ENCODE measurements at regions of chr15 and their contacts with region 1.

Region 1: DNA sequence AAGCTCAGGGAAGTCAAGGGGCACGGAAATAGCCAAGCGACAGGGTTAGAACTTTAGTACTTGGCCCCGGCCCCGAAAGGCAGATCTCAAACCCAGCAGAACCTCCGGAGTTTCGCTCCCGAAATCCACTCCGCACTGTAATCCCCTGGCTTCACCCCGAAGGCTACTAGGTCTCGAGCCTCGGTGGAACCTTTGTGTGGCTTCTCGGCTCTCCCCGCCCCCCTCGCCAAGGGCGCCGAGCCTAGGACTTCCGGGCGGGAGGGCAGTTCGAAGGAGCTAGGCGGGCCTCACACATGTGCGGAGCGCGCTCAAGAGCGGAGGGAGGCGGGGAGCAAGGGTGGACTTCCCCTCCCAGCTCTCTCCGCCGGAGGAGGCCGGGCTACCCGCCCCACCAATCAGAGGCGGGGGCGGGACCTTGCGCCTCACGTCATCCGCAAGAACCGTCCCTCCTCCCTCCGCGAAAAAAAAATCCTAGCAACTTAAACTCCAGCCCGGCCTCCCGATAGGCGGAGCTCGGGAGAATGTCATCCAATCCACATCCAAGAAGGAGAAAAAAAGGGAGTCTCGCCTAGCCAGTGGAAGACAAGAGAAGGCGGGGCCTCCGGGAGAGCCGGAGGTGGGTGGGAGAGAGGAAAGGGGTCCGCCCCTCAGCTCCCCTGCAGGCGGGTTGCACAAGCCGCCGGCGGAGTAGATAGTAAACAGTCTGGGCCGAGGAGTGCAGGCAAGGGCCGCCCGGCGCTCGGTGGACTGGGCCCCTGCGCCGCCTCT is 2.4 kb upstream of the SIN3A start:
- DNase-seq: peak; percentile 99
- ATAC-seq: peak; percentile 21
- H3K4me3 ChIP-seq: peak overlapping the region; percentile 86
- H3K27ac ChIP-seq: peak overlapping the region; percentile 74
- H3K4me1 ChIP-seq: peaks cover 30% of the 10 kb centered on the region
- H3K27me3 ChIP-seq: no peaks in the 10 kb centered on the region
- CTCF ChIP-seq: no peak

Region 2: GRCh38 chr15:75350601-75351361 is 103.1 kb before region 1 on chr15:
- CTCF ChIA-PET with region 1: no interaction called
- POLR2A ChIA-PET with region 1: interaction called, 24 read pairs
- intact Hi-C with region 1: no loop called
- DNase-seq: no peak
- ATAC-seq: no peak
- H3K4me3 ChIP-seq: no peak overlapping the region
- H3K27ac ChIP-seq: no peak overlapping the region
- H3K4me1 ChIP-seq: no peaks in the 10 kb centered on the region; the same call in 1 of the 2 replicates
- H3K27me3 ChIP-seq: no peaks in the 10 kb centered on the region
- CTCF ChIP-seq: no peak

Region 3: DNA sequence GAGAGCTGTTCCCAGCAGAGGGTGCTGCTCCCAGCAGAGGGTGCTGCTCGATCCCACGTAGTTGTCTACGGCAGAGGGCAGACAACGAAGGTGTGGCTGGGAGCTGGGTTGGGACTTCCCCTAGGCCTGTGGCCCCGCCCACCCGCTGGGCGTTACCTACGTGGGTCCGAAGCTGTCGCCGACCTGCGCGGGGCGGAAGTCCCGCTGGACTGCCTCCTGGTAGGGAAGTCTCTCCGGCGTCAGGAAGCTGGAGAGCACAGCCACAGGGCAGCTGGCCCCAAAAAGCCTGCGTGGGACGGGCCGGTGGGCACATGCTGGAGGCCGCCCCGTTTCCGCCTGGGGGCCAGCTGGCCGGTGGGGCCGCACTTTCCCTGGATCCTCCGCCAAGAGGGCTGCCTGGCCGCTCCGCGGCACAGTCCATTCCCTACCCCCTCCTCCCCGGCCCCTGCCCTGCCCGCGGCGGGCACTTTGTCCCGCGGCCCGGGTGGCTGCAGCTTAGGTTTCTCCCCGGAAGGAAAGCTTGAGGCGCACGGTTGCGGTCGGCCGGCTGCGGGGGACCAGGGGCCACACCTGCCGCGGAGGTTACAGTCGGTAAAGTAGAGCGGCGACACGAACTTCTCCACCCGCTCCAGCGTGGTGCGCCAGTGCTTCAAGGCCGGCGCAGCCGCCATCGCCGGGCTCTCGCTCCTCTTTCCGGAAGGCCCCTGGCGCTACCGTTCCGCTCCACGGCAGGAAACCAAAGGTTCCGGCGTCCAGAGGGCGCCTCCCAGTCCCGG is 85.8 kb before region 1 on chr15 and contains the start of gene MAN2C1:
- CTCF ChIA-PET with region 1: interaction called, 7 read pairs
- POLR2A ChIA-PET with region 1: interaction called, 34 read pairs
- intact Hi-C with region 1: loop called (anchors 2 kb)
- DNase-seq: peak; percentile 98
- ATAC-seq: peak; percentile 94
- H3K4me3 ChIP-seq: peak within 1 kb of the TSS; percentile 87
- H3K27ac ChIP-seq: peak within 1 kb of the TSS; percentile 91
- H3K4me1 ChIP-seq: peaks cover 16% of the 10 kb centered on the region
- H3K27me3 ChIP-seq: no peaks in the 10 kb centered on the region
- CTCF ChIP-seq: peak; percentile 79
- total RNA-seq, gene MAN2C1: 120 and 126 TPM in 2 replicates

Region 4: DNA sequence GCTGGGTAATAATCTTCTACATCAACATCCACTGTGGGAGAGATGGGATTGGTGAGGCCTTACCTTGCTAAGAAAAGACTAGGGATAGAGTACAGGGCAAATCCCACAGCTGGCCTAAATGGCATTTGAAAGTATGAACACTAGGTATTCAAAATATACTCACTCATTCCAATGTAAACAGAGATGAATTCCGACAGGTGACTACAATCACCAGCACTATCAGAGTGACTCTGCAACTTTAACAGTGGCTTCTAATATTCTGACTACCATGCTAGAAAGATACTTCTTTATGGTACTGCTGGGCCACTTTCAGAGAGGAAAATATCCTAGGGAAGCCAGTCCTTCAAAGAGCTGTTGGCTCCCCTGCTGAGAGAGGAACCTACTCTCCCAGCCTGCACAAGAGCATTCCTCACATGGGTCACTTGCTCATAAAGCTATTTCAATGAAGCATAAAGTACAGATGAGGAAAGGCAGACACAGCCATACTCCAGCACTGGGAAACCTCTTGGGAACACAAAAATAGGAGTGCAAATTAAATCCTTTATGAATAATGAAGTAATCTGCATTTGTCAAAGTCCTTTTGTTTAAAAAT is 64.0 kb before region 1 on chr15:
- CTCF ChIA-PET with region 1: no interaction called
- POLR2A ChIA-PET with region 1: no interaction called
- intact Hi-C with region 1: no loop called
- DNase-seq: no peak
- ATAC-seq: no peak
- H3K4me3 ChIP-seq: no peak overlapping the region
- H3K27ac ChIP-seq: no peak overlapping the region
- H3K4me1 ChIP-seq: no peaks in the 10 kb centered on the region
- H3K27me3 ChIP-seq: no peaks in the 10 kb centered on the region
- CTCF ChIP-seq: no peak

Region 5: DNA sequence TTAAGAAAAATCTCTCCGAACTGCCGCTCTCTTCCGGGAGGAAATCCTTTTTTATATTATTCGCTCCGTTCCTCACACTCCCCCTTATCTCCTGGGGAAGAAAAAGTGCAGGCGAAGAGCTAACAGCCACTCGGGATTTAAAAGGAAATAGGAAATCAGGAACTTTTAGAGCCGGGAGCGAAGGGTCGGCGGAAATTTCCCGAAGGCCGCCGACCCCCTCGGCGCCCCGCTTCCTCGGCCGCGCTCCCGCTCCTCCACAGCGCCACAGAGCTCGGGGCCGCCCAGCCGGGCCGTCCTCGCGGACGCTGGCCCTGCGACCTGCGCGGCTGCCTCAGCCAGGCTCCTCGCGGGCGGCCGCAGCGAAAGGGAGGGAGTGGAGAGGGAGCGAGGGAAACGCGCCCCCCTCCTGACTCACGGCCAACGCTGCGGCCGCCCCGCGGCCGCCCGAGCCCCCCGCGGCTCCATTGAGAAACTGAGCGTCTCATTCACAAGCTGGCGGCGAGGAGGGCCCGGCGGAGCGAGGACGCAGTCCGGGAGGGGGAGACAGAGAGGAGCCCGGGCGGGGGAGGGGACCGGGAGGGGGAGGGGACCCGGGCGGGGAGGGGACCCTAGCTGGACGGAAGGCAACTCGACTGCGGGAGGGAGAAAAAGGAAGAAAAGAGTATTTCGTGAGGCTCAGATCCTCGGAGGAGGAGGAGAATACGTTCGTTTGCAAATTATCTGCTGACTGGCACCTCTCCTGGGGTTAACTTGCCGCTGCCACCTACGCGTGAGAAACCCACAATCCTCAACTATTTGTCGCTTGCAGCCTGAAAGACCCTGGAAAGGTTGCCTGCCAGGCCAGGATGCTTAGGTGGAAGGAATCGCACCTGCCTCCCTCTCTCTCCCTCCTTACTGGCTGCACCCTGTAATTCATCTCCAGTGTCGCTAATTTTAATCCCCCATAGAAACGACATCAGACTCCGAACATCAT is 125.3 kb after region 1 on chr15 and contains the start of gene PTPN9:
- CTCF ChIA-PET with region 1: no interaction called
- POLR2A ChIA-PET with region 1: interaction called, 4 read pairs
- intact Hi-C with region 1: loop called (anchors 2 kb)
- DNase-seq: peak; percentile 65
- ATAC-seq: peak; percentile 70
- H3K4me3 ChIP-seq: peak within 1 kb of the TSS; percentile 97
- H3K27ac ChIP-seq: peak within 1 kb of the TSS; percentile 26
- H3K4me1 ChIP-seq: peaks cover 13% of the 10 kb centered on the region
- H3K27me3 ChIP-seq: no peaks in the 10 kb centered on the region
- CTCF ChIP-seq: peak; percentile 42; the same call in 1 of the 2 replicates
- total RNA-seq, gene PTPN9: 9.1 and 15.7 TPM in 2 replicates

Region 6: GRCh38 chr15:75606711-75607699 is 153.1 kb after region 1 on chr15:
- CTCF ChIA-PET with region 1: no interaction called
- POLR2A ChIA-PET with region 1: interaction called, 13 read pairs
- intact Hi-C with region 1: no loop called
- DNase-seq: no peak
- ATAC-seq: no peak
- H3K4me3 ChIP-seq: no peak overlapping the region
- H3K27ac ChIP-seq: no peak overlapping the region
- H3K4me1 ChIP-seq: no peaks in the 10 kb centered on the region
- H3K27me3 ChIP-seq: no peaks in the 10 kb centered on the region
- CTCF ChIP-seq: no peak

Region 7: GRCh38 chr15:75625542-75626347 is 171.9 kb after region 1 on chr15 and contains the start of gene SNUPN:
- CTCF ChIA-PET with region 1: no interaction called
- POLR2A ChIA-PET with region 1: interaction called, 16 read pairs
- intact Hi-C with region 1: no loop called
- DNase-seq: peak; percentile 80
- ATAC-seq: peak; percentile 73
- H3K4me3 ChIP-seq: peak within 1 kb of the TSS; percentile 93
- H3K27ac ChIP-seq: peak within 1 kb of the TSS; percentile 78
- H3K4me1 ChIP-seq: peaks cover 24% of the 10 kb centered on the region
- H3K27me3 ChIP-seq: no peaks in the 10 kb centered on the region
- CTCF ChIP-seq: no peak
- total RNA-seq, gene SNUPN: 7.9 and 13.5 TPM in 2 replicates

Region 8: GRCh38 chr15:75647370-75648155 is 193.7 kb after region 1 on chr15 and contains the start of gene SNX33:
- CTCF ChIA-PET with region 1: no interaction called
- POLR2A ChIA-PET with region 1: no interaction called
- intact Hi-C with region 1: loop called (anchors 5 kb)
- DNase-seq: peak; percentile 77
- ATAC-seq: peak; percentile 74
- H3K4me3 ChIP-seq: peak within 1 kb of the TSS; percentile 93
- H3K27ac ChIP-seq: peak within 1 kb of the TSS; percentile 64
- H3K4me1 ChIP-seq: peaks cover 51% of the 10 kb centered on the region
- H3K27me3 ChIP-seq: no peaks in the 10 kb centered on the region
- CTCF ChIP-seq: peak; percentile 64
- total RNA-seq, gene SNX33: 16.2 and 16.8 TPM in 2 replicates